ENCODE measurements at regions of chr1 and their contacts with region 1.

Region 1: DNA sequence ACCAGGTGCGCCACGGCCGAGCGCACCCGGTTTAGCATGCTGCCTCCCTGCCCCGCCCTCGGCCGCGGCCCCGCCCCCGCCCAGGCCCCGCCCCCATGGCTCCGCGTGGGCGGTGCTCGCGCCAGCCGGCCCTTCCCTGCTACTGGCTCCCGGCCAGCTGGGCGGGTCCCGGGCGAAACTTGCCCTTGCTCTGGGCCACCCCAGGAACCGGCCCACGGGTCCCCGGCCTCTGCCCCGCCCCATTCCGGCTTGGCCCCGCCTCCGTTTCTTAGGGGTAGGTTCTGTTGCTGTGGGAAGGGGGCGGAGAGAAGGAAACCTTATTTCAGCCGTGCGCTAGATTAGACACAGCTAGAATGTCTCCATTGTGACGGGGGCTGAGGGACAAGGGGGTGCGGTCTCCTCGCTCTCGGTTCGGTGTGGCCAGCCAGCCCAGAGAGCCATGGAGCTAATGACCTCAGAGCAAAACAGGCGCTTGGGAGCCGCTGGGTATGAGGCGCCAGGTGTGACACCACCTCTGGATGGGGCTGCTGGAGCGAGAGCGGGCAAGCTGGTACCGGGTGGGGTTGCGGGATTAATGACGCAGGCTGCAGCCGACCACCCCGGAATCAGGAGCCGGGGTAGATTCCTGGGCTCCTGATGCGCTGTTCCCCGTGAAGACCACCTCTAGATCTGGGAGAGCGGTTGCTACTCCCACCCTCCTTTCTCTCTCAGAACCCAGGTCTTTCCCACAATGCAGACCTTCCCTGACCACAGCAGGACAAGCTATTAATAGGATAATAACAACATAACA is at the start of gene PPM1J:
- DNase-seq: peak; percentile 72 to 98 (median 87)
- ATAC-seq: peak; percentile 83 to 85 (median 84)
- H3K4me3 ChIP-seq: peak within 1 kb of the TSS; percentile 55 to 83
- H3K4me3 Mint-ChIP-seq: peak within 1 kb of the TSS; percentile 84 to 87 (median 86)
- H3K27ac ChIP-seq: no peak within 1 kb of the TSS
- H3K27ac Mint-ChIP-seq: peak within 1 kb of the TSS in 1 of 2 donors; percentile 34
- H3K4me1 ChIP-seq: peaks cover 6 to 31% of the 10 kb centered on the region in 2 experiments
- H3K4me1 Mint-ChIP-seq: peaks cover 19 to 31% (median 20%) of the 10 kb centered on the region in 3 donors
- H3K27me3 ChIP-seq: peaks cover 2 to 47% of the 10 kb centered on the region in 2 experiments
- H3K27me3 Mint-ChIP-seq: peaks cover 6 to 11% of the 10 kb centered on the region in 2 donors
- total RNA-seq, gene PPM1J: 0.15 to 0.77 (median 0.38) TPM

Region 2: DNA sequence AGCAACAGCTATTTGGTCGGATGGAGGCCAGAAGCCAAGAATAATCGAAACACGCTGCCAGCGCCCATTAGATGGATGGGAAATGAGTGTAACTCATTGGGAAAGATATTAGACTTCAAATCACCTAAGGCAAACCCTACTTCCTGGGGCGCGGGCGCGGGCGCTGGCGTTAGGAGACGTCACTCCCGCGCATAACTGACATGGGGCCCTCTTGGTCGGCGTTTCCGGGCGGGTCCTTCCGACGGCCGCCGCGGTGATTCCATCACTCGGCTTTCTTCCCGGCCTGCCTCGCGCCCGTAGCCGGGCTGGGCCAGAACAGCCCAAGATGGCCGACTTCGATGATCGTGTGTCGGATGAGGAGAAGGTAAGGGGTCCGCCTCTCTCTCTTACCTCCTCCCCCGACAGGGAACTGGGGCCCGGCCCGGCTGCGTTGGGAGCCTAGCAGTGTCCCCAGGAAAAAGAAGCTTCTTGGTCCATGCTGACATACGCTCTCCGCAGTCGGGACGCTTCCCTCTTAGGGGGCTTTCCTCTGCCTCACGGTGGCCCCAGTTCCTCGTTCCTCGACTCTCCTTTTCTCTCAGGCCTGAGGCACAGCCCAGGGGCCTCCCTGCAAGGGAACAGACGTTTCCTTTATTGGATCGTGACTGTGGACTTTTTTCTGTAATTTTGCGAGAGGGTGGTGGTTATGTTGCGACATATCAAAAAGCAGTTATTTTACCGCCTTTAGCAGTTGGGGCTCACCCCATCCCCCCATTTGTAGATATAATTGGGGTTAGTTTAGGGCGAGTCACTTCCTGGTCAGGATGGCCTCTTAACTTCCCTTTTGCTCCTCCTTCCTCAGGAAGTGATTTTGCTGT is 95.7 kb before region 1 on chr1 and contains the start of gene CAPZA1:
- CTCF ChIA-PET with region 1: interaction called, 4 to 15 read pairs
- POLR2A ChIA-PET with region 1: interaction called, 4 to 5 read pairs
- DNase-seq: peak; percentile 74 to 95 (median 91)
- ATAC-seq: peak; percentile 80 to 88 (median 88)
- H3K4me3 ChIP-seq: peak within 1 kb of the TSS; percentile 88 to 97
- H3K4me3 Mint-ChIP-seq: peak within 1 kb of the TSS; percentile 97 to 100 (median 97)
- H3K27ac ChIP-seq: peak within 1 kb of the TSS; percentile 100
- H3K27ac Mint-ChIP-seq: peak within 1 kb of the TSS; percentile 98 to 100
- H3K4me1 ChIP-seq: peaks cover 30 to 36% of the 10 kb centered on the region in 2 experiments
- H3K4me1 Mint-ChIP-seq: peaks cover 43 to 55% (median 50%) of the 10 kb centered on the region in 3 donors
- H3K27me3 ChIP-seq: no peaks in the 10 kb centered on the region
- H3K27me3 Mint-ChIP-seq: no peaks in the 10 kb centered on the region
- total RNA-seq, gene CAPZA1: 115 to 189 (median 138) TPM

Region 3: DNA sequence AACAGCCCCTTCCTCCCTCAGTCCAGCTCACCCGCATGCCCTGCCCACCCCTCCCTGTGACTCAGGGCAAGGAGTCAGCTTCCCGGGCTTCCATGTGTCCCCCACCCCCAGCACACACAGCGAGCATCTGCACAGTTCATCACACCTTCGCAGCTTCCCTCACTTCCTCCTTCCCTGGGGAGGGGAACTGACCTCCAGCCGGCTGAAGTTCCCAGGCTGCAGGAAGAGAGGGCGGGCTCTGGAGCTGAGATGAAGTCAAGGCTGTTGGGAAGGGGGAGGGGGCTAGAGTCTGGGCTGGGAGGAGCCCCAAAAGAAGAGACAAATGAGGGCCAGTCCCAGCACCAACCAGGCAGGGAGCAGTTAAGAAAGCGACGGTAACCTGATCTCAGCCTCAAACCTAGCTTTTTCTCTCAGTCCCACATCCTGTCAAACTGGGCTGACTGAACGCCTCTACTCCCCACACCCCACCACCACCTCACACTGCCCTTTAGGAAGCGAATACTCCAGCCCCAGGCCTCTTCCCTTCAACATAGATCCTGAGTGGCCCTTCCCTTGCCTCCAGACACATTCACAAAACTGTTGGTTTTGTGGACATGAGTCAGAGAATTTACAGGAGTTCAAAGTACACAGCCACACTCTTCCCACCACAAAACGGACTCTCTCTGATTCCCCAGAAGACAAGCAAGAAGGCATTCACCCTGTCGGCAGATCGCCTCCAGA is 10.4 kb before region 1 on chr1:
- CTCF ChIA-PET with region 1: interaction called, 3 to 17 read pairs
- POLR2A ChIA-PET with region 1: interaction called in 1 of 2 experiments, 3 read pairs
- DNase-seq: peak in 27 of 35 experiments; percentile 22 to 71 (median 43)
- ATAC-seq: peak; percentile 67 to 77 (median 70)
- H3K4me3 ChIP-seq: peak overlapping the region in 1 of 2 donors; percentile 27
- H3K4me3 Mint-ChIP-seq: peak overlapping the region; percentile 61 to 74 (median 69)
- H3K27ac ChIP-seq: peak overlapping the region; percentile 39
- H3K27ac Mint-ChIP-seq: peak overlapping the region; percentile 79 to 82
- H3K4me1 ChIP-seq: peaks cover 15 to 62% of the 10 kb centered on the region in 2 experiments
- H3K4me1 Mint-ChIP-seq: peaks cover 53 to 67% (median 54%) of the 10 kb centered on the region in 3 donors
- H3K27me3 ChIP-seq: peaks cover 0 to 4% of the 10 kb centered on the region in 2 experiments
- H3K27me3 Mint-ChIP-seq: no peaks in the 10 kb centered on the region

Region 4: GRCh38 chr1:112803906-112804762 is 88.7 kb after region 1 on chr1:
- CTCF ChIA-PET with region 1: interaction called, 5 to 16 read pairs
- POLR2A ChIA-PET with region 1: no interaction called
- DNase-seq: peak in 29 of 35 experiments; percentile 1 to 52 (median 16)
- ATAC-seq: peak; percentile 42 to 77 (median 48)
- H3K4me3 ChIP-seq: no peak overlapping the region
- H3K4me3 Mint-ChIP-seq: no peak overlapping the region
- H3K27ac ChIP-seq: no peak overlapping the region
- H3K27ac Mint-ChIP-seq: no peak overlapping the region
- H3K4me1 ChIP-seq: no peaks in the 10 kb centered on the region
- H3K4me1 Mint-ChIP-seq: no peaks in the 10 kb centered on the region
- H3K27me3 ChIP-seq: peaks cover 0 to 15% of the 10 kb centered on the region in 2 experiments
- H3K27me3 Mint-ChIP-seq: peaks cover 0 to 4% of the 10 kb centered on the region in 2 donors